ENCODE measurements at regions of chrX and their contacts with region 1.

Region 1: DNA sequence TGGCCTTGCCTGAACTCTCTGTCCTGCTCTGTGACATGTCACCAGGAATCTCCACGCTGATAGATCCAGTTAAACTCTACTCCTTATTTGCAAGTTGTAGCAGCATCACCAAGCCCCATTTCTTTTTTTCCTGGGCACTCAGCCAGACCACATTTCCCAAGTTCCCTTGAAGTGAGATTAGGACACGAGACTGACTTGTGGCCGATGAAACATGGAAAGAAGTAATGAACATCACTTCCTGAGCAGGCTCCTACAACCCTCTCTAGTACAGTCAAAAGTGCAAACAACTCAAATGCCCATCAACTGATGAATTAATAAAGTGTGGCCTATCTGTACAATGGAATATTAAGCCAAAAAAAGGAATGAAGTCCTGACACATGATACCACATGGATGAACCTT is 74.6 kb downstream of the MAP3K15 start:
- DNase-seq: peak; percentile 49
- H3K4me3 ChIP-seq: no peak overlapping the region
- H3K27ac ChIP-seq: no peak overlapping the region
- H3K4me1 ChIP-seq: no peaks in the 10 kb centered on the region
- H3K27me3 ChIP-seq: no peaks in the 10 kb centered on the region
- CTCF ChIP-seq: no peak

Region 2: GRCh38 chrX:19280636-19281035 is 160.1 kb before region 1 on chrX:
- CTCF ChIA-PET with region 1: no interaction called
- dilution Hi-C with region 1: no loop called
- in situ Hi-C with region 1: no loop called
- intact Hi-C with region 1: no loop called
- DNase-seq: no peak
- H3K4me3 ChIP-seq: no peak overlapping the region
- H3K27ac ChIP-seq: no peak overlapping the region
- H3K4me1 ChIP-seq: no peaks in the 10 kb centered on the region
- H3K27me3 ChIP-seq: no peaks in the 10 kb centered on the region
- CTCF ChIP-seq: no peak

Region 3: DNA sequence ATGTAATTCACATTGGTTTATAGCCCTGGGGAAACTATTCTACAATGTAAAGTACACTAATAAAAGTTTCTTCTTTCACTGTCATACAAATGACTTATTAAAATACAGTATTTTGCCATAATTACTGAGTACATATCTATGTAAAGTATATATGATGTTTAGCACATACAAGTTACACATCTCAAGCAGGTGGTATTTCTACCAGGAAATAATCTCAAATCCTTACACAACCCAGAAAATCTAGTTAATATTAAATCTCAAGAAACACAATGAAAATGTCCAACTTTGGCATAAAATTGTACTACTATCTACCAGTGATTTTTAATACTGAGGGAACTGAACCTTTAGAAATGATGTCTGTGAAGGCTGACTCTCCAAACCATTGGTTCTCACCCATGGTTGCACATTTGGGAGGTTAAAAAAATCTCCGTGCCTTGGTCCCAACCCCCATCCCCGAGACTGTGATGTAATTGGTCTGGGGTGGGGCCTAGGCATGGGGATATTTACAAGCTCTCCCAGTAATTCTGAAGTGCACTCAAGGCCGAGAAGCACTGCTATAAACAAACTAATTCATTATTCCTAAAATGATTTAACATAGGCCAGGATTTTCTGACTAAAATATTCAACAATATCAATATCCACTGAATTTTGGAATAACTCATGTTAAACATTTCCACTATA is 46.9 kb after region 1 on chrX:
- CTCF ChIA-PET with region 1: no interaction called
- dilution Hi-C with region 1: loop called (anchors 5 kb)
- in situ Hi-C with region 1: no loop called
- intact Hi-C with region 1: no loop called
- DNase-seq: no peak
- H3K4me3 ChIP-seq: no peak overlapping the region
- H3K27ac ChIP-seq: no peak overlapping the region
- H3K4me1 ChIP-seq: no peaks in the 10 kb centered on the region
- H3K27me3 ChIP-seq: no peaks in the 10 kb centered on the region
- CTCF ChIP-seq: no peak